Dendritic cell treated with granulocyte-macrophage colony-stimulating factor and Interleukin-4, amounts not matched to agents 40 ng/mL and 50 ng/mL, for 4 days (primary cell): ENCODE measurements at regions of chr3 and their contacts with region 1.

Region 1: DNA sequence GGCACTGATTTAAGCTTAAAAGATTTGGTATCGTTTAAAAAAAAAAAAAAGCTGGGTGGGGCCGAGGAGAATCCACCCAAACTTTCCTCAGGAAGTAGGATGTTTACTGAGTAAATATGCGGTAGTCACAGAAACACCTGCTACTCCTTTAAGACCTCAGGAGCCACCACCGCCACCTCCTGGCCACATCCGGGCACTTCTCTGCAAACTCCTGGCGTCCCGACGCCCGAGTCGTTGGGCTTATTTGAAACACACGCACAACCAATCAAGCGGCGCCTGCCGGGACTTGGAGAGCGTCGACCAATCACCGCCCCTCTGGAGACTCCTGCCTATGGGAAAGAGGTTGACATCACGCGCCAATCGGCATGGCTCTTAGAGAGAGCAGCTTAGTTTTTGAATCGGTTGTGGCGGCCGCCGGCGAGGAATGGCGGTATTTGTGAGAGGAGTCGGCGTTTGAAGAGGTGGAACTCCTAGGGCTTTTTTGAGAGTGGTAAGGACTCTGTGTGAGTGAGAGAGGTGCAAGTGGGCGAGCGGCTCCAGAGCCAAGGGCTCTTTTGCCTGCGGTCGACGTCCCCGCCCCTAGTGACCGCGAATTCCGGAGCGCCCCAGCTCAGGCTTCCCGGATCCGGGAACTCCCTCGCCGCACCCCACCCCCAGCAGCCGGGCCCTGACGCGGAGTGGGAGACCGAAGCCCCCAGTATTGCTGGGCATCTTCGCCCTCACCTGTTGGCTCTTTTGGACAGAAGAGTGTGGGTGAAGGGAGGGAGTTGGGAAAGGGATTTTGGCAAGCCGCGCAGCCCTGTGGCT is at the start of gene ECT2:
- H3K4me3 Mint-ChIP-seq: peak within 1 kb of the TSS; percentile 96
- H3K27ac Mint-ChIP-seq: peak within 1 kb of the TSS; percentile 91
- H3K4me1 Mint-ChIP-seq: peaks cover 22% of the 10 kb centered on the region
- H3K27me3 Mint-ChIP-seq: no peaks in the 10 kb centered on the region

Region 2: DNA sequence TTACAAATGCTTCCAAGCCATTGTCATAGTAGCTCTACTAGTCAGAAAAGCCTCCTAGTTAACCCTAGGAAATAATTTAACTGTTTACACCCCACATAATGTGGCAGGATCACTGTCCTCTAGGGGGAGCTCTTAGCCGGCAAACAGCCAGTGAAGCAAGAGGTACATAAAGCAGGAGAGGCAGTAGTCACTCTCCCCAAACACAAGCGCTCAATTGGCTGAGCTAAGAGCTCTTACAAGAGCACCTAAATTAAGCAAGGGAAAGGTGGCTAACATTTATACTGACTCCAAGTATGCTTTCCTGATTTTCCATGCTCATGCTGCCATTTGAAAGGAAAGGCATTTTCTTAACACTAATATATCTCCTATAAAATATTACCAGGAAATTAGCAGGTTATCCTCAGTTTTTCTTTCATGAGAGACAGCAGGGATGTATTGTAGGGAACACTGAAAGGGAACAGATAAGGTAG is 77.3 kb before region 1 on chr3:
- intact Hi-C with region 1: loop called (anchors 1 kb)
- H3K4me3 Mint-ChIP-seq: no peak overlapping the region
- H3K27ac Mint-ChIP-seq: no peak overlapping the region
- H3K4me1 Mint-ChIP-seq: peaks cover 16% of the 10 kb centered on the region
- H3K27me3 Mint-ChIP-seq: no peaks in the 10 kb centered on the region

Region 3: GRCh38 chr3:172698631-172699030 is 51.9 kb before region 1 on chr3:
- intact Hi-C with region 1: loop called (anchors 2 kb)
- H3K4me3 Mint-ChIP-seq: peak overlapping the region; percentile 68
- H3K27ac Mint-ChIP-seq: peak overlapping the region; percentile 100
- H3K4me1 Mint-ChIP-seq: peaks cover 49% of the 10 kb centered on the region
- H3K27me3 Mint-ChIP-seq: no peaks in the 10 kb centered on the region

Region 4: DNA sequence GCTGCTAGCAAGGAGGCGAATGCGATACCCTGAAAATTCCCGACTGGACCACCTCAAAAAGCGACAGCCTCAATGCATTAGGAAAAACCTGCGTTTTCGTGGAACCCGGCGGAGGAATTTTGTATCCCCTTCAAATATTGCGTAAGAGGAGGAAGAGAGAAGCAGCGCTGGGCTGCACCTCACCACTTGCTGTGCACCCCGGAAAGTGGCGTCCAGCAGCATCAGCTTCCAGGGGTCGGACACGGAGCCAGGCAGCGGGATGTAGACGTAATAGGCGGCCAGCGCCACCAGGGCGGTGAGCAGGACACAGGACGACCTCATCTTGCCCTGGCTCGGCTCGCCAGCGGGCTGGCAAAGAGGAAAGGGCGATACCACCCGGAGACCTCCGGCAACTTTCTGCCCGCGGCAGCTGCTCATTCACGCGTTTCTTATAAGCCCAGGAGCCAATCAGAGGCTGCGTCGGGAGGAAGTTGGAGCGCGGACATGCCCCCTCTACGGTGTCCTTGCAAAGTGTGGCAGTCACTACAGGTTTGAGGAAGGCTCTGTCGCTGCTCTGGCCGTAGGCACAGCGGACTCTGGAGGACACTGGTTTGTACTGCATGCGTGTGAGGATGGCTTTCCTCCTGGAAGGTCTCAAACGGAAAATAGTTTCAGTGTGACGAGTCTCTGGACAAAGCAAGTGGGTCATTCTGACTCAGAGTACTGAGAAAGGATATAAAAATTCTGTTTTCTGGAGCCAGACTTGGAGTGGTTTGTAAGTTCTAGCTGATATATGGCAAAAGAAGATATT is 39.7 kb before region 1 on chr3 and contains the start of gene NCEH1:
- intact Hi-C with region 1: loop called (anchors 1 kb)
- H3K4me3 Mint-ChIP-seq: peak within 1 kb of the TSS; percentile 96
- H3K27ac Mint-ChIP-seq: peak within 1 kb of the TSS; percentile 99
- H3K4me1 Mint-ChIP-seq: peaks cover 22% of the 10 kb centered on the region
- H3K27me3 Mint-ChIP-seq: no peaks in the 10 kb centered on the region